IMR-90 (cell line): ENCODE measurements at regions of chr3 and their contacts with region 1.

Region 1: GRCh38 chr3:168684519-168684918 is 588.8 kb upstream of the GOLIM4 start:
- DNase-seq: no peak
- ATAC-seq: no peak
- H3K4me3 ChIP-seq: no peak overlapping the region
- H3K27ac ChIP-seq: no peak overlapping the region
- H3K4me1 ChIP-seq: no peaks in the 10 kb centered on the region
- H3K27me3 ChIP-seq: no peaks in the 10 kb centered on the region
- CTCF ChIP-seq: no peak
- POLR2A ChIP-seq: no peak
- RAD21 ChIP-seq: no peak

Region 2: DNA sequence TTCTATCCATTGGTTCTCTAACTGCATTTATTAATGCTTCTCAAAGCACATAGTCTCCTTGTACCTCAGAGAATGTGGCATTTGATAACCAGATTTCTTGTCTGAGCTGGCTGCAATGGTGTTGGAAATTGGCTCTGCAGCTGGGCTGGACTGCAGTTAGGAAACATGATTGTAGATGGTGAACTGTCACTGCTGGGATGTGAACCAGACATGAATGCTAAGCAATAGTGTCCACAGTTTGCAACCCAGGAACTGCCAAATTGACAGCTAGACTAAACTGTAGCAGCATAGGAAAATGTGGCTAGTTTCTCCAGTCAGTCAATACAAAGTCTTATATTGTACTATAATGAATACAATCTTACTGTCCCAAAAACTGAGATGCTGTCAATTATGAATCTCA is 67.8 kb after region 1 on chr3:
- CTCF ChIA-PET with region 1: interaction called, 12 read pairs
- POLR2A ChIA-PET with region 1: no interaction called
- dilution Hi-C with region 1: no loop called
- in situ Hi-C with region 1: no loop called
- intact Hi-C with region 1: no loop called
- DNase-seq: no peak
- ATAC-seq: no peak
- H3K4me3 ChIP-seq: no peak overlapping the region
- H3K27ac ChIP-seq: no peak overlapping the region
- H3K4me1 ChIP-seq: no peaks in the 10 kb centered on the region
- H3K27me3 ChIP-seq: no peaks in the 10 kb centered on the region
- CTCF ChIP-seq: no peak
- POLR2A ChIP-seq: no peak
- RAD21 ChIP-seq: no peak

Region 3: DNA sequence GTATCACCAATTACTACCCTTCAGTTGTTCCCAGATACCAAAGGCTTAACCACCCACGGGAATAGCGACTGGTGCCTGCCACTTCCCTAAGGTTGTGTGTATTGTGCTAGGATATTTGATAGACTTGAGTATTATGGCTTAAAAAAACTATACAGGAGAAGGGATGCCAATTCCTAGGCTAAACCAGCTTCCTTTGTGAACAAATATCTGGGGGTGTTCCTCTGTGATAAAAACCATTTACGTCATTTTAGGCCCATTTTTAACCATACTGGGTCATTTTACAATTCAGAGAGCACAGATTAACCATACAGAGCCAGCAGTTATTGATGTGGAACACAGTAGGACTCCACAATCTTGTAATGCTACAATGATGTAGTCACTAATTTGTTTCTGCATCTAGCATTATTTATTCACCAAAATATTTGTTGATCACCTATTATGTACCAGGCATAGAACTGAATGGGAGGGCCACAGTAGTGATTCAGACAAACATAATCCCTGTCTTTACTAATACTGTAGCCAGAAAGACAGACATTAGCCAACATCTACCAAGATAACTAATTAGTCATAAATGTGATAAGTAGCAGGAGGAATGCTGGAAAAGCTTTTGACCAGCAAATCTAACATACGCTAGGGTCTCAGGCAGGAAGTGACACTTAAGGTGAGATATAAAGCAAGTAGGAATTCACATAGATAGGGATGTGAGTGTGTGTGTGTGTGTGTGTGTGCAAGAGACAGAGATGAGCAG is 794.2 kb after region 1 on chr3:
- CTCF ChIA-PET with region 1: no interaction called
- POLR2A ChIA-PET with region 1: no interaction called
- dilution Hi-C with region 1: no loop called
- in situ Hi-C with region 1: no loop called
- intact Hi-C with region 1: no loop called
- DNase-seq: peak; percentile 14
- ATAC-seq: no peak
- H3K4me3 ChIP-seq: no peak overlapping the region
- H3K27ac ChIP-seq: no peak overlapping the region
- H3K4me1 ChIP-seq: no peaks in the 10 kb centered on the region
- H3K27me3 ChIP-seq: no peaks in the 10 kb centered on the region
- CTCF ChIP-seq: no peak
- POLR2A ChIP-seq: no peak
- RAD21 ChIP-seq: no peak